Caco-2 (cell line): ENCODE measurements at regions of chr3 and their contacts with region 1.

Region 1: GRCh38 chr3:49906004-49906743 is 2.5 kb upstream of the MST1R start:
- DNase-seq: peak; percentile 63 to 72
- H3K4me3 ChIP-seq: no peak overlapping the region
- H3K4me3 Mint-ChIP-seq: peak overlapping the region; percentile 58
- H3K27ac Mint-ChIP-seq: peak overlapping the region; percentile 71
- H3K4me1 ChIP-seq: peaks cover 46% of the 10 kb centered on the region
- H3K4me1 Mint-ChIP-seq: peaks cover 7% of the 10 kb centered on the region
- H3K27me3 ChIP-seq: no peaks in the 10 kb centered on the region
- H3K27me3 Mint-ChIP-seq: no peaks in the 10 kb centered on the region
- CTCF ChIP-seq: peak; percentile 69 to 90

Region 2: DNA sequence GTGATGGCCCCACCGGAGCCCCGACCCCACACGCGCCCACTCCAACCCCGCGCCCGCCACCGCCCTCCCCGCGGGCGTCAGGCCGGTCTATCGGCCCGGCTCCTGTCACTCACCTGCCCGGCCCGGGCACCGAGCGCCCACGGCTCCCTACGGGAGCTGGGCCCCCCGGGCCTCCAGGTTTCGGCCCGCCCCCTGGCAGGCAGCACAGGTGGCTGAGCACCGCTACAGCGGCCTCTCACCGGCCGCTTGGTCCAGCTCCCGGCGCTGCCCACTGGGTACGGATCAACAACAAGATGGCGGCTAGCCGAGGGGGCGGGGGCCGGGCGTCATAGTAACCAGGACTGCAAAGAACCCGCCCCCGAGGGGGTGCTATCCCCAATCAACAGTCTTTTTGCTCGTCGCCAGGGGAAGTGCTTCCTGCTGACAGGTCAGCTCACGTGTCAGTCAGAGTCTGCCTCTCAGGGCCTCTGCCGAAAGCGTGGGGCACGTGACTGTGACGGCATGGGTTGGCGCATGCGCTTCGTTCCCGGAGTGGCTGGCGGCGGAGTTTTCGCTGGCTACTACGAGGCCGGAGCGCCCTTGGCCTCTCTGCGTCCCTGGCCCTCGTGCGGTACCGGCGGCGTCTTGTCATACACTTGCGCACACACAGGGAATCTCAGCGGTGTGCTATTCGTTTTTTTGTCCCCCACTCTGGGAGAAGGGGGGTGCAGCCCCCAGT is 119.8 kb before region 1 on chr3 and contains the start of gene IP6K1:
- CTCF ChIA-PET with region 1: interaction called, 3 read pairs
- POLR2A ChIA-PET with region 1: interaction called, 11 read pairs
- intact Hi-C with region 1: no loop called
- DNase-seq: peak; percentile 99 to 100
- H3K4me3 ChIP-seq: peak within 1 kb of the TSS; percentile 71
- H3K4me3 Mint-ChIP-seq: peak within 1 kb of the TSS; percentile 85
- H3K27ac Mint-ChIP-seq: peak within 1 kb of the TSS; percentile 90
- H3K4me1 ChIP-seq: peaks cover 17% of the 10 kb centered on the region
- H3K4me1 Mint-ChIP-seq: peaks cover 2% of the 10 kb centered on the region
- H3K27me3 ChIP-seq: no peaks in the 10 kb centered on the region
- H3K27me3 Mint-ChIP-seq: no peaks in the 10 kb centered on the region
- CTCF ChIP-seq: no peak
- total RNA-seq, gene IP6K1: 35.5 and 39.6 TPM in 2 replicates

Region 3: GRCh38 chr3:49839193-49839809 is 66.9 kb before region 1 on chr3:
- CTCF ChIA-PET with region 1: interaction called, 12 read pairs
- POLR2A ChIA-PET with region 1: no interaction called
- intact Hi-C with region 1: loop called (anchors 1 kb)
- DNase-seq: peak; percentile 66 to 76
- H3K4me3 ChIP-seq: no peak overlapping the region
- H3K4me3 Mint-ChIP-seq: no peak overlapping the region
- H3K27ac Mint-ChIP-seq: no peak overlapping the region
- H3K4me1 ChIP-seq: no peaks in the 10 kb centered on the region
- H3K4me1 Mint-ChIP-seq: no peaks in the 10 kb centered on the region
- H3K27me3 ChIP-seq: no peaks in the 10 kb centered on the region
- H3K27me3 Mint-ChIP-seq: no peaks in the 10 kb centered on the region
- CTCF ChIP-seq: peak; percentile 78 to 86

Region 4: DNA sequence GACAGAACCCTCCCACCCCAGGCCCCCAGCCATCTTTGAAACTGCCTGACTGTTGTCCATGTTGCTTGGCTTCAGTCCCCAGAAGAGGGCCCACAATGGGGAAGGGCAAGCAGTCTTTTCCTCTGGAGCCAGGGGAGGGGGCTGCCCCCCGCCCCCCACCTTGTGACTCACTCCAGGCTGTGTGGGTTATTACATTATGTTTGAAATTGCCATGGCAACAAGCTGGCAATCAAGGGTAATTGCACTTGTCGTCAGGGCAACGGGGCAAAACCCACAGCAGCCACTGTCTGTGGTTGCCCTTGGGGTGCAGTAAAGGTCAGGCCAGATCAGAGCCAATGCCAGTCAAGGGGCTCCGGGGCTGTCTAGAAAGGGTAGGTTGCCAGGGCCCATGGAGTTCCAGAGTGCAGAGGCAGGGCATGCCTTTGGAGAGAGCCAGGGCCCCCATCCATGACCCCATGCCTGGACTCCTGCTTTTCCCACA is 33.3 kb before region 1 on chr3:
- CTCF ChIA-PET with region 1: interaction called, 8 read pairs
- POLR2A ChIA-PET with region 1: no interaction called
- intact Hi-C with region 1: loop called (anchors 1 kb)
- DNase-seq: peak in 1 of 2 experiments; percentile 25
- H3K4me3 ChIP-seq: no peak overlapping the region
- H3K4me3 Mint-ChIP-seq: no peak overlapping the region
- H3K27ac Mint-ChIP-seq: peak overlapping the region; percentile 65
- H3K4me1 ChIP-seq: peaks cover 41% of the 10 kb centered on the region
- H3K4me1 Mint-ChIP-seq: peaks cover 13% of the 10 kb centered on the region
- H3K27me3 ChIP-seq: no peaks in the 10 kb centered on the region
- H3K27me3 Mint-ChIP-seq: no peaks in the 10 kb centered on the region
- CTCF ChIP-seq: no peak

Region 5: DNA sequence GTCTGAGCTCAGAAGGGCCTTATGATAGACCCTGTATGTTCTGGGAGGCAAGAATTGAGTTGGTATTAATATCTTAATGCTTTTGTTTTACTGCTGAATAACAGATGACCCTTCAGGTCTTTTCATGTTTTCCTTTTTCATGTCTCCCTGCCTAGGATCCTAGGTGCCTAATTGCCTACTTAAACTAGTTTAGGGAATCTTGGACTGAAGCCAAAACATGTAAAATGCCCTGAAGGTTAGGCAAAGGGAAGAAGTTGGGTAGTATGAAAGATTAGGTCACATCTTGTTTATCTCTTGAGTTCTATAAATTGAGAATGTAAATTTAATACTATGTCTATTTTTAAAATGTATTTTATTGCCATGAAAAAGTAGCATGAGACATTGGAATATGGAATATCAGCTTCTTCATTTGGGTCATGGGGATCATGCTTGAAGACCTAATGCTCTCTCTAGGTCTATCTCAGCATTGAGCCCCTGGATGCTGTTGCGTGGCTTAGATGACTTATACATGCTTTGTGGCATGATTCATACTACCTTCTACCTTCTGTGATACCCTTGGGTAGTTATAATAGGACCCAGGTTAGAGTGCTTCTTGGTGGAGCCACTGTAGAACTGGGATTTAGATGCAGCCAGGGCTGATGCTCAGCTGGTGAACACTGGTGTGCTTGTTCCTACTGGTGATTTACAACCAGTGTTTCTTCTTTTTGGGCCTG is 60.2 kb after region 1 on chr3:
- CTCF ChIA-PET with region 1: no interaction called
- POLR2A ChIA-PET with region 1: no interaction called
- intact Hi-C with region 1: no loop called
- DNase-seq: no peak
- H3K4me3 ChIP-seq: no peak overlapping the region
- H3K4me3 Mint-ChIP-seq: no peak overlapping the region
- H3K27ac Mint-ChIP-seq: no peak overlapping the region
- H3K4me1 ChIP-seq: 0 out of 2 replicates have a peak, but pooled peaks cover 5% of the 10 kb centered on the region
- H3K4me1 Mint-ChIP-seq: peaks cover 5% of the 10 kb centered on the region
- H3K27me3 ChIP-seq: no peaks in the 10 kb centered on the region
- H3K27me3 Mint-ChIP-seq: no peaks in the 10 kb centered on the region
- CTCF ChIP-seq: no peak